Left cardiac atrium (tissue), 4 donors: ENCODE measurements at regions of chr17 and their contacts with region 1.

Region 1: DNA sequence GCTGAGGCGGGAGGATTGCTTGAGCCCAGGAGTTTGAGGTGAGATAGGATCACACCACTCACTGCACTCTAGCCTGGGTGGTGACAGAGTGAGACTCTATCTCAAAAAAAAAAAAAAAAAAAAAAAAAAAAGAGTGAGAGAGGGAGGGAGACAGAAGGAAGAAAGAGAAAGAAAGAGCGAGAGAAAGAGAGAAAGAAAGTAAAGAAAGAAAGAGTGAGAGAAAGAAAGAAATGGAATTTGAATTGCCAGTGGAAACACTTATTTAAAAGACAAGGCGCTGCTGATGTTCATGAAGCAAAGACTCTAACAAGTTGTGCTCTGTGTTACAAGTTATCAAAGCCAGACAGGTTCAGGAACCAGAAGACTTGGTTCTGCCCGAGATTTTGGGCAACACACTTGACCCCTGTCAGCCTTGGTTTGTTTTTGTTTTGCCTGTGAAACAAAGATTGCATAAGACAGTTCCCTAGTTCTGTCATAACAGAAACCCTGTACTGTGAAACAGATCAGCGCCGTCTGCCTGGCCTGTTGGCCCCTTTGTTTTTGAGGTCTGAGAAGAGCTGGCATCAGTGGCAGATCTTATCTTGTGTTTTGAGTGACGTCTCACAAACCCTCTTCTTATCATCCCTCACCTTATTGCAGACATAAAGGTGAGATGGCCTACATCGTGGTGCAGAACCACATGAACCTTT is 55.4 kb upstream of the ENDOV start:
- DNase-seq: no peak
- ATAC-seq: no peak

Region 2: DNA sequence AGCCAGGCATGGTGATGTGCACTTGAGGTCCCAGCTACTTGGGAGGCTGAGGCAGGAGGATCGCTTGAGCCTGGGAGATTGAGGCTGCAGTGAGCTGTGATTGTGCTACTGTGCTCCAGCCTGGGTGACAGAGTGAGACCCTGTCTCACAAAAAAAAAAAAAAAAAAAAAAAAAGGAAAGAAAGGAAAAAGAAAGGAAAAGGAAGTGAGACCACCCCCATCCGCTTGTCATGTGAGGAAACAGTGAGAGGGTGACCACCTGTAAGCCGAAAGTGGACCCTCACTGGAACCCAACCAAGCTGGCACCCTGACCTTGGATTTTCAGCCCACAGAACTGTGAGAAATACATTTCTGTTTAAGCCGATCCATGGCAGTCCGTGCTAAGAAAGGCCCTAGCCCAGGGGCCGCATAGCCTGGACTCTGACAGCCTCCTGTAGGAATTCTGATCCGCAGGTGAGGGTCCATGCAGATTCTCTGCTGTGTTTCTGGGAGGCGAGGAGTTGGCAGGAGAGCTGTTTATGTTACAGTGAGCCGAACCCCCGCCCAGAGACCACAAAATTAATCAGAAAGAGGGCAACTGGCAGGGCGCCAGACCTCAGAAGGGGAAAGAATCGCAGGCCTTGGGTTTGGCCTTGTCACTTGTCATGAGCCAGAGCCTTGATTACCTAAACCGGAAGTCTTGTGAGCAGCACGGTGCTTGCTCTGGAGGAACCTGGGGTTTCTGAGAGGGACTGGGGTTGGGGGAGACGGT is 140.4 kb before region 1 on chr17:
- intact Hi-C with region 1: no loop called
- DNase-seq: peak; percentile 81
- ATAC-seq: peak; percentile 48 to 61

Region 3: GRCh38 chr17:80307994-80308691 is 51.4 kb before region 1 on chr17:
- intact Hi-C with region 1: loop called in 1 of 2 experiments (anchors 10 kb)
- DNase-seq: no peak
- ATAC-seq: peak in 1 of 2 donors; percentile 14